Activated B cell treated with CpG ODN at 0.5 μM for 24 hours (primary cell): ENCODE measurements at regions of chr1 and their contacts with region 1.

Region 1: DNA sequence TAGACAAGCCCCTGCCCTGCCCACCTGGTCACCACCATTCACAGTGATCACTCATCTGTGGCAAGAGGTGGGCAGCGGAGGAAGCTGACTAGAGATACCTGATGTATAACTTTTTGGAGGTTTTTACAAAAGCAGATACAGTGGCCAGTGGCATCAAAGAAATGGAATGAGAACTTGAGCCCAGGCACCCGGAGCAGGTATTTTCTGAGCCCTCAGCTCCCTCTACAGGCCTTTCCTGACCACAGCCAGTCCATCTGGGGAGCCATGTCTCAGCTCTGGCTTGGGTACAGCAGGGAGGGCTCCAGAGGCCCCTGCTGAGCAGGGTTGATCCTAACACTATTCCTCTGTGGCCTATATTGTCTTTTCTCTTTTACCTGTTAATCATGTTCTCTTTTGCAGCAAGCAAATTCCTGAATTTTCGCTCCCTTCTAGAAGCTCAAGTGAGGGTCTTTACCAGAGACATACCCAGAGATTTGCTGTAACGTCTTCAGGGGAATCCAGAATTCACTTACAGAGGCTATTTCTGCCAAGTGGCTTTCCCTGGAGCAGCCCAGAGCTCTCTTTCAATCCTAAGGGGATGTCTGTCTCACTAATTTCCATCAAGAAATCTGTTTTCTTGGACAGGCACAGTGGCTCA is 27.3 kb downstream of the GPR157 start:
- DNase-seq: no peak
- ATAC-seq: peak; percentile 77
- H3K4me3 Mint-ChIP-seq: no peak overlapping the region
- H3K27ac Mint-ChIP-seq: no peak overlapping the region
- H3K4me1 Mint-ChIP-seq: no peaks in the 10 kb centered on the region
- H3K27me3 Mint-ChIP-seq: no peaks in the 10 kb centered on the region
- CTCF ChIP-seq: no peak

Region 2: DNA sequence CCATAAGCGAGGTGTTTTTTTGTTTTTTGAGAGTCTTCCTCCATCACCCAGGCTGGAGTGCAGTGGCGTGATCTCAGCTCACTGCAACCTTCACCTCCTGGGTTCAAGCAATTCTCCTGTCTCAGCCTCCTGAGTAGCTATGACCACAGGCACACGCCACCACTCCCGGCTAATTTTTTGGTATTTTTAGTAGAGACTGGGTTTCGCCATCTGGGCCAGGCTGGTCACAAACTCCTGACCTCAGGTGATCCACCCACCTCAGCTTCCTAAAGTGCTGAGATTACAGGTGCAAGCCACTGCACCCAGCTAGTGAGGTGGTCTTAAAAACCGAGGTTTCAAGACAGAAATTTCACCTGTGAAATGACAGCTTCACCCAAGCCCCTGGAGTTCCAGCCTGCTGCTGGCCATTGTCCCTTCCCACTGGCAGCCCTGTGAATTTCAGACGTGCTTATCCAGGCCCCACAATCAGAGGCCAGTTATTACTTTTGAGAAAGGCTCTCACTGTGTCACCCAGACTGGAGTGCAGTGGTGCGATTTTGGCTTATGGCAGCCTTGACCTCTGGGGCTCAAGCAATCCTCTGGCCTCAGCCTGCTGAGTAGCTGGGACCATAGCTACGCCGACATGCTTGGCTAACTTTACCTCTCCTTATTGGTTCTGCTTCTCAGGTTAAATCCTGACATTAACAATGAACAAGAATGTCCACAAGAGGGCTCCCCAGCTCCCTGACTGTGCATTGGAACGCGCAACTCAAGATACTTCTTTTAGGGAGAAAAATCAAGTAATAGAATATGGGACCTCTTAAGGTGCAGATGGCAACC is 242.5 kb before region 1 on chr1:
- CTCF ChIA-PET with region 1: interaction called, 6 read pairs
- POLR2A ChIA-PET with region 1: no interaction called
- intact Hi-C with region 1: loop called (anchors 1 kb)
- DNase-seq: no peak
- ATAC-seq: peak; percentile 80
- H3K4me3 Mint-ChIP-seq: no peak overlapping the region
- H3K27ac Mint-ChIP-seq: peak overlapping the region; percentile 13
- H3K4me1 Mint-ChIP-seq: peaks cover 21% of the 10 kb centered on the region
- H3K27me3 Mint-ChIP-seq: no peaks in the 10 kb centered on the region
- CTCF ChIP-seq: no peak

Region 3: GRCh38 chr1:8911416-8911815 is 190.2 kb before region 1 on chr1:
- CTCF ChIA-PET with region 1: interaction called, 11 read pairs
- POLR2A ChIA-PET with region 1: interaction called, 3 read pairs
- intact Hi-C with region 1: no loop called
- DNase-seq: no peak
- ATAC-seq: no peak
- H3K4me3 Mint-ChIP-seq: no peak overlapping the region
- H3K27ac Mint-ChIP-seq: no peak overlapping the region
- H3K4me1 Mint-ChIP-seq: no peaks in the 10 kb centered on the region
- H3K27me3 Mint-ChIP-seq: peaks cover 9% of the 10 kb centered on the region
- CTCF ChIP-seq: no peak

Region 4: GRCh38 chr1:8962812-8963530 is 138.7 kb before region 1 on chr1:
- CTCF ChIA-PET with region 1: interaction called, 11 read pairs
- POLR2A ChIA-PET with region 1: no interaction called
- intact Hi-C with region 1: loop called (anchors 1 kb)
- DNase-seq: no peak
- ATAC-seq: peak; percentile 56
- H3K4me3 Mint-ChIP-seq: no peak overlapping the region
- H3K27ac Mint-ChIP-seq: no peak overlapping the region
- H3K4me1 Mint-ChIP-seq: no peaks in the 10 kb centered on the region
- H3K27me3 Mint-ChIP-seq: peaks cover 8% of the 10 kb centered on the region
- CTCF ChIP-seq: no peak

Region 5: GRCh38 chr1:9058465-9058864 is 43.2 kb before region 1 on chr1:
- CTCF ChIA-PET with region 1: no interaction called
- POLR2A ChIA-PET with region 1: interaction called, 13 read pairs
- intact Hi-C with region 1: no loop called
- DNase-seq: no peak
- ATAC-seq: no peak
- H3K4me3 Mint-ChIP-seq: no peak overlapping the region
- H3K27ac Mint-ChIP-seq: no peak overlapping the region
- H3K4me1 Mint-ChIP-seq: peaks cover 12% of the 10 kb centered on the region
- H3K27me3 Mint-ChIP-seq: no peaks in the 10 kb centered on the region
- CTCF ChIP-seq: no peak

Region 6: DNA sequence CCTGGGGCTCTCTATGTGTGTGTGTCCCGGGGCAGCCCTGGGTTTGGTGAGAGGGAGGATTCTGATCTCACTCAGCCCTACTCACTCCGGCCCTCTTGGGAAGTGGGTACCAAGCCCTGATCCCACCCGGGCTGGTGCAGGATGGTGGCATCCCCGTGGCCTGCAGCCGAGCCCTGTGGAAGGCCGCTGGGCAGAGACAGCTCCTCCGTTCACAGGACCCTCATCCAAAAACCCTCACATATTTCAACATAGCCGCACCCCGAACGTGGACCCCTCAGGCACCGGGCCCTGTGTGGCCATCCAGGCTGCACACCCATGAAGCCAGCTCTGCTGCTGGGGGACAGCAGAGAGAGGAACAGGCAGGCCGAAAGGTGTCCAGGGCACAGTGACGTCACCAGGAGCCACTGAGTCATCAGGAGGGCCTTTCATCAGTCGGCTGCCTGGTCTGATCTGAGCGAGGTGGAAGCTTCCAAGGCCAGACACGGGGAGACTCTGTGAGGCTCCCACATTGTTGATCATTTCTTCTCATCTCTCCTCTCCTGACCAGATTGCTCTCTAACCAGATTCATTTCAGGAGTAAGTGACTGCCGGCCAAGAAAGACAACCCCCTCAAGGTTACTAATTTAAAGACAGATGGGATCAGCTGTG is 43.5 kb after region 1 on chr1:
- CTCF ChIA-PET with region 1: no interaction called
- POLR2A ChIA-PET with region 1: no interaction called
- intact Hi-C with region 1: no loop called
- DNase-seq: no peak
- ATAC-seq: no peak
- H3K4me3 Mint-ChIP-seq: no peak overlapping the region
- H3K27ac Mint-ChIP-seq: no peak overlapping the region
- H3K4me1 Mint-ChIP-seq: peaks cover 3% of the 10 kb centered on the region
- H3K27me3 Mint-ChIP-seq: peaks cover 3% of the 10 kb centered on the region
- CTCF ChIP-seq: no peak

Region 7: GRCh38 chr1:9388335-9389180 is 286.9 kb after region 1 on chr1:
- CTCF ChIA-PET with region 1: no interaction called
- POLR2A ChIA-PET with region 1: no interaction called
- intact Hi-C with region 1: no loop called
- DNase-seq: no peak
- ATAC-seq: peak; percentile 28
- H3K4me3 Mint-ChIP-seq: no peak overlapping the region
- H3K27ac Mint-ChIP-seq: no peak overlapping the region
- H3K4me1 Mint-ChIP-seq: no peaks in the 10 kb centered on the region
- H3K27me3 Mint-ChIP-seq: peaks cover 2% of the 10 kb centered on the region
- CTCF ChIP-seq: no peak

Region 8: DNA sequence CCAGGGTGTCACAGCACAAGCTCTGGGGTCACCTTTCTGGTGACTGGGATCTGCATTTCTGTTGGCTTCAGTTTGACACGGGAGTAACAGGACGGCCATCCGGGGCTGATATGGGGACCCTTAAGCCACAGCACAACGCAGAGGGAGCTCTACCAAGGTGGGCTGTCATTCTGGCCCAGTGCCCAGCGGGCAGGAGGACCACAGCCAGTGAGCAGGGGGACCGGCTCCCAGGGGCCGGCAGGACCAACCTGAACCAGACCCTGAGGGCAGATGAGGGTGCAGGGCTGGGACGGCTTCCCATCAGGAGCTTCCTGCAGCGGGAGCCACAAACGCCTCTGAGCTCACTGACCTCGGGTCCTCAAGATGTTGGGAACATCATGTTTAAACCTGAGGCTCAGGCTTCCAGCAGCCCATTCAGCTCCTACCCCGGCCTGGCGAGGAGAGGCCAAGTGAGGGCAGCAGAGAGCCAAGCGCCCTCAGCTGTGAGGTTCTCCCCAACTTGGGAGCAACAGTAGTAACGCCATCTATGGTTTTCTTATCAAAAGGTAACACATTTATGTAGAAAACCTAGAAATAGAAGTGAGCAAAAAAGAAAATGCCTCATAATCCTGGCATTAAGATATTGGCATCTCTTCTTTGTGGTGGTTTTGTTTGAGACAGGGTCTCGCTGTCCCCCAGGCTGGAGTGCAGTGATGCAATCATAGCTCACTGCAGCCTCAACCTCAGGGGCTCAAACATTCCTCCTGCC is 513.9 kb after region 1 on chr1:
- CTCF ChIA-PET with region 1: no interaction called
- POLR2A ChIA-PET with region 1: no interaction called
- intact Hi-C with region 1: no loop called
- DNase-seq: peak; percentile 47
- ATAC-seq: peak; percentile 96
- H3K4me3 Mint-ChIP-seq: no peak overlapping the region
- H3K27ac Mint-ChIP-seq: no peak overlapping the region
- H3K4me1 Mint-ChIP-seq: peaks cover 4% of the 10 kb centered on the region
- H3K27me3 Mint-ChIP-seq: no peaks in the 10 kb centered on the region
- CTCF ChIP-seq: peak; percentile 43